Activated CD8-positive, alpha-beta memory T cell treated with anti-CD3 and anti-CD28 coated beads, Interleukin-2, amount 10 ng/mL, durations not matched to agents 7 days and 5 days (primary cell): ENCODE measurements at regions of chr11 and their contacts with region 1.

Region 1: DNA sequence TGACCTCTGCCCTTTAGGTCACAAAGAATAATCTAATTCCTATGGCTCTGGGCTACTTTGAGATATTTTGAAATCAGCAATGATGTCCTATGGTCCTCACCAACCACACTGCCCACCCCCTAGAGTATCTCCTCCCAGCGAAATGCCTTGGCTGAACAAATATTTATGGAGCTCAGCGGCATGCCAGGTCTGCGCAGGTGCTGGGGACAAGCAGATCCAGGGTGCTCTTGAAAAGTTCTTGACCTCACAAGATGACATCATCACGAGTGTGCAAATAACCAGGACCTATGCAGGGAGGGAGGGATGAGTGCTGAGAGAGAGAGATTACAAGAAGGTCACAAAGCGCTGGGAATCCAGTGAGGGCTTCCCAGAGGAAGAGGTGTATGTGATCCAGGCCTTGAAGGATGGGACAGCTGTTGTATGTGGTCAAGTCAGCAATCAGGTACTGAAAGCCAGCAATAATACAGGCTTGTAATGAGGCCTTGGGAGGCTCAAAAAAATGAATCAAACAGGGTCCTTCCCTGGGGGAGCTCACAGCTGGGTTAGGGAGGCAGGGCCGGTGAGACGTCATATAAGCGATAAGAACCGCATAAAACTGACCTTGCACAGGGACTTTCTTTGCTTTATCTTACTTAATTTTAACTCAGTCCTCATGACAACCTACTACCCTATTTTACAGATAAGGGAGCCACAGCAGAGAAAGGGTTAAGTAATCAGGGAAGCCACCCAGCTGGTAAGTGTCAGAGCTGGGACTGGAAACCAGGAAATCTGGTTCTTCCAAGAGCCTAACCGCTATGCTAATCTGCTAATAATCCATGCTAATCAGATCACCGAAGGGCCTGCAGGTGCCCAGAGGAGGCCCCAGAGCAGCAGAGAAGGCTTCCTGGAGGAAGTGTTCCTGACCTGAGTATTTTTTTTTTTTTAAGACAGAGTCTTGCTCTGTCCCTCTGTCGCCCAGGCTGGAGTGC is 8.3 kb downstream of the ARRB1 start:
- DNase-seq: no peak
- ATAC-seq: no peak
- H3K4me3 Mint-ChIP-seq: no peak overlapping the region
- H3K27ac Mint-ChIP-seq: peak overlapping the region; percentile 4
- H3K4me1 Mint-ChIP-seq: peaks cover 82% of the 10 kb centered on the region
- H3K27me3 Mint-ChIP-seq: no peaks in the 10 kb centered on the region

Region 2: GRCh38 chr11:75328426-75329277 is 14.5 kb before region 1 on chr11:
- CTCF ChIA-PET with region 1: interaction called, 44 read pairs
- DNase-seq: peak; percentile 88
- ATAC-seq: peak; percentile 93
- H3K4me3 Mint-ChIP-seq: peak overlapping the region; percentile 32
- H3K27ac Mint-ChIP-seq: peak overlapping the region; percentile 86
- H3K4me1 Mint-ChIP-seq: peaks cover 39% of the 10 kb centered on the region
- H3K27me3 Mint-ChIP-seq: no peaks in the 10 kb centered on the region

Region 3: GRCh38 chr11:75380711-75381420 is 37.7 kb after region 1 on chr11:
- CTCF ChIA-PET with region 1: interaction called, 58 read pairs
- DNase-seq: no peak
- ATAC-seq: no peak
- H3K4me3 Mint-ChIP-seq: no peak overlapping the region
- H3K27ac Mint-ChIP-seq: no peak overlapping the region
- H3K4me1 Mint-ChIP-seq: peaks cover 15% of the 10 kb centered on the region
- H3K27me3 Mint-ChIP-seq: peaks cover 2% of the 10 kb centered on the region

Region 4: DNA sequence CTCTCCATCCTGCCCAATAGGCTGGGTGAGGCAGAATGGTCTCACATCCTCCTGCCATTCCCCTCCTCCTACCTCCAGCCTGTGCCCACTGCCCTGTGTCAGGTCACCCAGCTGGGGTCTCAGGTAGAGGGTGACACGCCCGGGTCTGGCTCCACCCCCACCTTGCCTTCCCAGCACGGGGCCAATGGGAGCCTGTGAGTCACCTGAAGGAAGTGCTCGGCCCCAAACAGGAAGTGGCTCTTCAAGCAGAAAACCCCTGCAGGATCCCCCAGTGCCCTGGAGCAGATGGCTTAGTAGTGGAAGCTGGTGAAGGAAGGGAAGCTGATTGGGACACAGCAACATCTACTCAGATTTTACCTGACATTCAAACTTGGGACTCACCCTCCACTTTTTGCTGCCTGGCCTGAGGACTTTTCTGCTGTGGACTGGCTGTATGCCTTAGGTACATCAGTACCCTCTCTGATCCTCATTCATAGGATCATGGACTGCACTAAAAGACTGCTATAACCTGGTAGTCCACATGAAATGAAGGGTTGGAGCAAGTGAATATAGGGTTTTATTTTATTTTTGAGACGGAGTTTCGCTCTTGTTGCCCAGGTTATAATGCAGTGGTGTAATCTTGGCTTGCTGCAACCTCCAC is 149.1 kb after region 1 on chr11:
- CTCF ChIA-PET with region 1: no interaction called
- DNase-seq: peak; percentile 79
- ATAC-seq: peak; percentile 92
- H3K4me3 Mint-ChIP-seq: peak overlapping the region; percentile 58
- H3K27ac Mint-ChIP-seq: peak overlapping the region; percentile 79
- H3K4me1 Mint-ChIP-seq: peaks cover 25% of the 10 kb centered on the region
- H3K27me3 Mint-ChIP-seq: no peaks in the 10 kb centered on the region